Transverse colon (tissue), 4 donors: ENCODE measurements at regions of chr12 and their contacts with region 1.

Region 1: GRCh38 chr12:123681605-123682004 is 10.7 kb downstream of the TCTN2 start:
- DNase-seq: no peak
- H3K4me3 ChIP-seq: no peak overlapping the region
- H3K27ac ChIP-seq: no peak overlapping the region
- H3K4me1 ChIP-seq: no peaks in the 10 kb centered on the region
- H3K27me3 ChIP-seq: no peaks in the 10 kb centered on the region
- CTCF ChIP-seq: no peak
- EP300 ChIP-seq: no peak
- POLR2A ChIP-seq: no peak

Region 2: DNA sequence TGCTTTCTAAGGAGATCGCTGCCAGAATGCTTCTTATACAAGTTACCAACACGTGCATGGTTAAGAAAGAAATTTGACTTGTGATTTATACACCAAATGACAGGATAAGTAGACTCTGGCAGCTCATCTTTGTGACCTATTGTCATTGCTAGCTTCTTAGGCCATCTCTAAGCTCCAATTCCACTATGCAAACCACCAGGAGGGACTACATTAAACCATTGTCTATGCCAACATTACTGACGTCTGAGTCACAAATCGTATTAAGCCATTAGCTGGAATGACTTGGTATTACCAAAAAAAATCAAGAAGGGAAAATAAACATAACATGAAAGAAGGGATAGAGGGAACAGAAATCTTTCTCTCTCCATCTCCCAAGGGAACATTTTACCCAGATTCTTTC is 1399.5 kb before region 1 on chr12:
- in situ Hi-C with region 1: no loop called
- intact Hi-C with region 1: loop called (anchors 5 kb)
- DNase-seq: no peak
- H3K4me3 ChIP-seq: no peak overlapping the region
- H3K27ac ChIP-seq: no peak overlapping the region
- H3K4me1 ChIP-seq: no peaks in the 10 kb centered on the region
- H3K27me3 ChIP-seq: no peaks in the 10 kb centered on the region
- CTCF ChIP-seq: no peak
- EP300 ChIP-seq: no peak
- POLR2A ChIP-seq: no peak